Sigmoid colon (tissue), 7 donors: ENCODE measurements at regions of chr12 and their contacts with region 1.

Region 1: GRCh38 chr12:52884526-52885293 is 20.2 kb downstream of the KRT8 start:
- DNase-seq: peak; percentile 85
- H3K4me3 ChIP-seq: no peak overlapping the region
- H3K27ac ChIP-seq: no peak overlapping the region
- H3K4me1 ChIP-seq: peaks cover 0 to 6% (median 3%) of the 10 kb centered on the region in 4 donors
- H3K27me3 ChIP-seq: peaks cover 0 to 2% (median 0%) of the 10 kb centered on the region in 3 donors
- CTCF ChIP-seq: peak; percentile 60 to 93 (median 90)
- EP300 ChIP-seq: no peak
- POLR2A ChIP-seq: no peak

Region 2: DNA sequence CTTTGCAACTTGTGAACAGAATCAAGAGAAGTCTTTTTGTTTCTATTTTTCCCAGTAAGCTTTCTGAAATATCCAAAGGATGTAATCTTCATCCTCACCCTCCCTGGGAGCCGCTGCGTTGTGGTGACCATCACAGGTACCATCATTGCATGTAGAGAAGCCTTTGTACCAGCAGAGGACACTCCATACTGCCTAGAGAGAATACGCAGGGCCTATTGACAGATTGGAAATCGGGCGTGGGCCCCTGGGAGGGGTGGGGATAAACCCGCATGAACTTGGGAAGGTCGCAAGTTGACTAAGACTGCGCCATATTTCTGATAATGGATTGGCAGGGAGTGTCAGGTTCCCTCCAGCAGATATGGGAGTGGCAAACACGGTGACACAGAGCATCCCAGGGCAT is 217.2 kb before region 1 on chr12:
- intact Hi-C with region 1: no loop called
- DNase-seq: no peak
- H3K4me3 ChIP-seq: no peak overlapping the region
- H3K27ac ChIP-seq: no peak overlapping the region
- H3K4me1 ChIP-seq: no peaks in the 10 kb centered on the region
- H3K27me3 ChIP-seq: peaks cover 0 to 9% (median 8%) of the 10 kb centered on the region in 3 donors
- CTCF ChIP-seq: no peak
- EP300 ChIP-seq: no peak
- POLR2A ChIP-seq: no peak

Region 3: DNA sequence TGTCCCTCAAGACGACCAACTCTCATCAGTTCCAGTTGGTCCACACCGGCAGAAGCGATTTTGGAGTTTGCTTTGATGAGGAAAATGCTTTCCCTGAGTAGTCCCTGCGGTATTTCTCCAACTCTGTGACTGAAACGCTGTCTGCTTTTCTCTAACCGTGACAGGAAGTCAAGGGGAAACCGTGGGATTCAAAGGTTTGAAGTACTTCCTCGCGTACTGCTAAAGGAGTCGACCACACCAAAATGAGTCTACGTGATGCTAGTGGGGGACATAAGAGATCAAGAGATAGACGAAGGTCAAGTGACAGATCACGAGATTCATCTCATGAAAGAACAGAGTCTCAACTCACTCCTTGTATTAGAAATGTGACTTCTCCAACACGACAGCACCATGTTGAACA is 136.1 kb before region 1 on chr12:
- intact Hi-C with region 1: no loop called
- DNase-seq: no peak
- H3K4me3 ChIP-seq: no peak overlapping the region
- H3K27ac ChIP-seq: no peak overlapping the region
- H3K4me1 ChIP-seq: no peaks in the 10 kb centered on the region
- H3K27me3 ChIP-seq: no peaks in the 10 kb centered on the region
- CTCF ChIP-seq: no peak
- EP300 ChIP-seq: no peak
- POLR2A ChIP-seq: no peak

Region 4: DNA sequence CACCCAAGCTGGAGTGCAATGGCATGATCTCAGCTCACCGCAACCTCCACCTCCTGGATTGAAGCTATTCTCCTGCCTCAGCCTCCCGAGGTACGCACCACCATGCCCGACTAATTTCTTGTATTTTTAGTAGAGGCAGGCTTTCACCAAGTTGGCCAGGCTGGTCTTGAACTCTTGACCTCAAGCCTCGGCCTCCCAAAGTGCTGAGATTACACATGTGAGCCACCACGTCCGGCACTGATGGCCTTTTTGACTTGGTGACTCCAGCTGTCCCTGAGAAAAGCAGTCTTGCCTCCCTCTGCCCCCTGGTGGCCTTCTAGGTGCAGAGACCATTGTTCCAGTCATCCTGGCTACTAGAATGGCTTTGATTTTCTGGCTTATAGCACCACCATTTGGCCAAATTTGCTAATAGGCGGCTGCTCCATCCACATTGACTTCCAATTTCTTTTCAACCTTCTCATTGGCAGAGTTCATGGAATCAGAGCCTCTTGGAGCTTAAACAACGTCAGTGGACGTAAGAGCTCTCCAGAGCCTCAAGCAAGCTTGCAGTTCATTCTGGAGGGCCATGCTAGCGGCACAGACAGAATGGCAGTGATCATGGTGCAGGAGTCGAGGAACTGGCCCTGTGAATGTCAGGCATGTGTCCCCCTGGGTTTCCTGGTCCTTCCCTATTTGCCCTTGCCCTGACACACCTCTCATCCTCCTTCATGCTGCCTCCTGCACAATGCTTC is 96.1 kb after region 1 on chr12:
- intact Hi-C with region 1: loop called (anchors 1 kb)
- DNase-seq: peak; percentile 91
- H3K4me3 ChIP-seq: no peak overlapping the region
- H3K27ac ChIP-seq: no peak overlapping the region
- H3K4me1 ChIP-seq: no peaks in the 10 kb centered on the region
- H3K27me3 ChIP-seq: peaks cover 0 to 9% (median 0%) of the 10 kb centered on the region in 3 donors
- CTCF ChIP-seq: peak; percentile 92 to 99 (median 96)
- EP300 ChIP-seq: no peak
- POLR2A ChIP-seq: no peak

Region 5: DNA sequence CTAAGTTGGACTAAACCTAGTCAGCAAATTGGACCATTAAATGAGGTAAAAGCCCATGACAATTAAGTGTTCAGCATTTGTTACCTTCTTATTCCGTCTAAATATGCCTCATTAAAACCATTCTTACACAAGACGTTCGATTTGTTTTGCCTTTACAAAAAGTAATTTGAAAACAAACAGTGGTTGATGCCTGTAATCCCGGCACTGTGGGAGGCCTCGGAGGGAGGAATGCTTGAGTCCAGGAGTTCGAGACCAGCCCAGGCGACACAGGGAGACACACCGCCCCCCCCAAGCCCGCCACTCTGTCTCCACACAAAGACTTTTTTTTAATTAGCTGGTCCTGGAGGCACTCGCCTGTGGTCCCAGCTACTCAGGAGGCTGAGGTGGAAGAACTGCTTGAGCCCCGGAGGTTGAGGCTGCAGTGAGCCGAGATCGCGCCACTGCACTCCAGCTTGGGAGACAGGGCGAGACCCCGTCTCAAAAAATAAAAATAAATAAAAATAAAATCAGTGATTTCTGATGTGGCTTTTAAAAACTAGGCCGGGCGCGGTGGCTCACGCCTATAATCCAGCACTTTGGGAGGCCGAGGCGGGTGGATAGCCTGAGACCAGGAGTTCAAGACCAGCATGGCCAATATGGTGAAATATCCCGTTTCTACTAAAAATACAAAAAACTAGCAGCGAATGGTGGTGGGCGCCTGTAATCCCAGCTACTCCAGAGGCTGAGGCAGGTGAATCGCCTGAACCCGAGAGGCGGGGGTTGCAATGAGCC is 120.7 kb after region 1 on chr12:
- intact Hi-C with region 1: no loop called
- DNase-seq: peak; percentile 68
- H3K4me3 ChIP-seq: peak overlapping the region; percentile 82 to 97 (median 88)
- H3K27ac ChIP-seq: peak overlapping the region; percentile 92 to 96 (median 94)
- H3K4me1 ChIP-seq: peaks cover 0 to 42% (median 40%) of the 10 kb centered on the region in 4 donors
- H3K27me3 ChIP-seq: no peaks in the 10 kb centered on the region
- CTCF ChIP-seq: no peak
- EP300 ChIP-seq: no peak
- POLR2A ChIP-seq: peak in 1 of 2 donors; percentile 26

Region 6: DNA sequence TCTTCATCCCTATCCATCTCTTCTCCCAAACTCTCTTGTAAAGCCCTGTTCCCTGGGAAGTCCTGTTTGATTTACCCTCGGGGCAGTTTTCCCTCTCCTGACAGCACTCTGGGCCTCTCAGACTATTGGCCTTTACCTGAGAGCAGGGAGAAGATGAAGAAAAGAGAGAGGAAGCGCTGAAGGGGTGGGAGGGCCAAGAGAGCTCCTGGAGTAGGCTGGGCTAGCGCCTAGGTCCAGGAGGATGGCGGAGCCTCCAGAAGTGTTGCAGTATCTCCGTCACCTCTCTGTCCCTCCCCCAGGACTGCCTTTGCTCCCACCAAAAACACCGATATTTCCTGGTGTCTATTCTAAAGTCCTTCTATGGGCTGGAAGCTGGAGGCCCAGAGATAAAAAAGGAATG is 207.0 kb after region 1 on chr12:
- intact Hi-C with region 1: no loop called
- DNase-seq: peak; percentile 34
- H3K4me3 ChIP-seq: no peak overlapping the region
- H3K27ac ChIP-seq: no peak overlapping the region
- H3K4me1 ChIP-seq: peaks cover 0 to 4% (median 2%) of the 10 kb centered on the region in 4 donors
- H3K27me3 ChIP-seq: no peaks in the 10 kb centered on the region
- CTCF ChIP-seq: no peak
- EP300 ChIP-seq: no peak
- POLR2A ChIP-seq: no peak